Body of pancreas (tissue), 4 donors: ENCODE measurements at regions of chr19 and their contacts with region 1.

Region 1: DNA sequence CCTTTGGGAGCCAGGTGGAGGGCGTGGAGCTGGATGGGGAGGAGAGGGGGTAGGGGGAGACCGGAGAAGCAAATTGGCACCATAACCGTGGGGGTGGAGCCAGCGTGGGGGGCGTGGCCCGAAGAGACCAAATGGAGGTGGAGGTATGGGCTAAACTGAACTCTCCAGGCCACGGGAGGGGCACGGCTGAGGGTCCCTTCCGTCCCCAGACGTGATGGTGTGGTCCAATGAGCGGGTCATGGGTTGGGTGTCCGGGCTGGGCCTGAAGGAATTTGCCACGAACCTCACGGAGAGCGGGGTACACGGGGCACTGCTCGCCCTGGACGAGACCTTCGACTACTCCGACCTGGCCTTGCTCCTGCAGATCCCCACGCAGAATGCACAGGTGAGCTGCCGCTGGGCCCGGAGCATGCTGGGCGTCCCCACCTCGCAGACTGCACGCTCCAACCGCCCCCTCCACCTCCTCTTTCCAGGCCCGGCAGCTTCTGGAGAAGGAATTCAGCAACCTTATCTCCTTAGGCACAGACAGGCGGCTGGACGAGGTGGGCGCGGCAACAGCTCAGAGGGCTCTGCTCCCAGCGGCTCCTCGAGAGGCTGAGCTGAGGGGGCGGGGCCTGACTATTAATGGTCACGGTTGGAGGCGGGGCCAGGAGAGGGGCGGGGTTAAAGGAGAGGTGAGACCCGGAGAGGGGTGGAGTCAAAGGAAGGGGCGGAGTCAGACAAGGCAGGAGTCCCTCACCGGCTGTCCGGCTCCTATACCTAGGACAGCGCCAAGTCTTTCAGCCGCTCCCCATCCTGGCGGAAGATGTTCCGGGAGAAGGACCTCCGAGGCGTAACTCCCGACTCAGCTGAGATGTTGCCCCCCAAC is 6.2 kb downstream of the HRC start:
- DNase-seq: peak; percentile 99 to 100 (median 100)
- ATAC-seq: peak; percentile 78
- H3K4me3 ChIP-seq: peak overlapping the region; percentile 23 to 72
- H3K27ac ChIP-seq: peak overlapping the region; percentile 78 to 85 (median 82)
- H3K4me1 ChIP-seq: peaks cover 44% of the 10 kb centered on the region
- H3K27me3 ChIP-seq: no peaks in the 10 kb centered on the region
- CTCF ChIP-seq: no peak
- POLR2A ChIP-seq: peak; percentile 12 to 34 (median 19)

Region 2: DNA sequence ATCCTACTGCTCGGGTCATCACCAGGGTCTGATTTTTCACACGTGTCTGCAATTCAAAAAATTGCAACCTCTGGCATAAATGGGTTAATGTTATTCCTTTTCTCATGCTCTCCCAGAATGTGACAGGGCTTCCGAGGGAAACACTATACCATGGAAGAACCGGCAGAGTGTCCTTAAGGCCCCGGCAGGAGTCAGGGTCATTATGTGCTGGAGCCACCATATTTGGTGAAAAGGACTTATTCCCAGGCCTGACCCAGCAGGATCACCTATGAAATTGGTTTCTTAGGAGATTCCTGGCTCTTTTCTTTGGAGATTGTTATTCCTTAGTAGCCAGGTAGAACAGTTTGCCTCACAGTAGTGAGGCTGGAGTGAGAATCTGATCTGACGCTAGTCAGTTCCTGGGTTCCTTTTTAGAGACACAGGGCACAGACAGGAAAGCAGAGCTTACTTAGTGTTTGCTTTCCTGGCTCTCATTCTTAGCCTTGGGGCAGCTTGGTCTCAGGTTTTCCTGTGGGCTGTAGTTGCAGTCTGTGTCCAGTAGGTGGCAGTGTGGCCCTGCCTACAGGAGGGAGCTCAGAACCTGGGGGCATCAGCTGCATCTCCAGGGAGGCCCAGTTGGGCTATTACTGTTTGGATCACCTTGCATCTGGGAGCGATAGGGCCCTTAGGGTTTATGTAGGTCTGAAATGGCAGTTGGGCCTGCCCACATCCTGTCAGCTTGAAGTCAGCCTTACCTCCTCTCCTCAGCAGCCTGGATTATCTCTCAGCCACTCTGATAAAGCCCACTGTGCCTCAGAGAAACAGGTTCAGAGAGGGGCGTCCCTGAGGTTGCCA is 51.3 kb before region 1 on chr19:
- intact Hi-C with region 1: loop called (anchors 10 kb)
- DNase-seq: peak; percentile 72 to 80 (median 73)
- ATAC-seq: peak; percentile 86
- H3K4me3 ChIP-seq: no peak overlapping the region
- H3K27ac ChIP-seq: peak overlapping the region in 1 of 4 donors; percentile 45
- H3K4me1 ChIP-seq: peaks cover 15% of the 10 kb centered on the region
- H3K27me3 ChIP-seq: no peaks in the 10 kb centered on the region
- CTCF ChIP-seq: peak; percentile 93 to 100 (median 96)
- POLR2A ChIP-seq: no peak

Region 3: DNA sequence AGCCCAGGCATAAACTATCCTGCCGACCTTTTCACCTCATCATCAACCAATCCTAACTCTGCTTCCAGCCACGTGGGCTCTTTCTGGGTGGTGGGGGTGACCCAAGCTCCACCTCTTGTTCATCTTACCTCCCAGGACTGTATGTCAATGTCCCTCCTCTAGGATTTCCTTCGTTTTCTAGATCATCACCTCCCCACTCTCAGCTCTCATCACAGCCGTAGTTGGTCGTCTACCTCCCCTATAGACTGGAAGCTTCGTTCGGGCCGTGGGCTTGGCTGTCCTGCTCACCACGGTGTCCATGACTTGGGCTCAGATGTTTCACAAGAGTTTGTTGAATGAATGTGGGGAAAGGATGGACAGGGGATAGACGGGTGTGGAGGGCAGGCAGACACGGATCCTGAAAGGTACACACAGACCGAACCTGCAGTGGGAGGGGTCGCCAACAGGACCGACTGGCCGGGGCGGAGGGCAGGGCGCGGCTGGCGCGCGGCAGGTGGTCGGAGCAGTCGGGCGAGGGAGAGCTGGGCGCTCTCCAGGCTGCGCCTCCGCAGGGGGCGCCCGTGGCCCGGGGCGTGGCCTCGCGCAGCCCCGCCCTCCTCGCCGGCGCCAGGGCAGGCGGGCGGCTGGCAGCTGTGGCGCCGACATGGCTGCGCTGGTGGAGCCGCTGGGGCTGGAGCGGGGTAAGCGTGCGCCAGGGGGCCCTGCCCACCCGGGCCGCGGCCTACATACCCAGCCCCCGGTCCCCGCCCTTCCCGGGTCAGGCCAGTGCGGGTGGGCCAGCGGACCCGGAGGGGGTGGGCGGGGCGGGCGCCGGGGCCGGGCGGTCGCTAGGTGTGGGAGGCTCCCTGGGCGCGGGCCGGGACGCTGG is 35.0 kb before region 1 on chr19 and contains the start of gene LIN7B:
- intact Hi-C with region 1: loop called (anchors 5 kb)
- DNase-seq: peak; percentile 52 to 78 (median 72)
- ATAC-seq: peak; percentile 69
- H3K4me3 ChIP-seq: peak within 1 kb of the TSS; percentile 70 to 80
- H3K27ac ChIP-seq: peak within 1 kb of the TSS in 3 of 4 donors; percentile 63 to 73 (median 68)
- H3K4me1 ChIP-seq: peaks cover 29% of the 10 kb centered on the region
- H3K27me3 ChIP-seq: no peaks in the 10 kb centered on the region
- CTCF ChIP-seq: peak in 6 of 7 experiments; percentile 23 to 80 (median 66)
- POLR2A ChIP-seq: no peak
- total RNA-seq, gene LIN7B: 8.3 to 24.1 TPM

Region 4: GRCh38 chr19:49127674-49128544 is 21.1 kb before region 1 on chr19:
- intact Hi-C with region 1: loop called (anchors 2 kb)
- DNase-seq: peak; percentile 96 to 98 (median 97)
- ATAC-seq: peak; percentile 97
- H3K4me3 ChIP-seq: no peak overlapping the region
- H3K27ac ChIP-seq: peak overlapping the region in 3 of 4 donors; percentile 50 to 78 (median 74)
- H3K4me1 ChIP-seq: peaks cover 15% of the 10 kb centered on the region
- H3K27me3 ChIP-seq: no peaks in the 10 kb centered on the region
- CTCF ChIP-seq: peak in 5 of 7 experiments; percentile 14 to 54 (median 34)
- POLR2A ChIP-seq: peak in 1 of 3 donors; percentile 23

Region 5: DNA sequence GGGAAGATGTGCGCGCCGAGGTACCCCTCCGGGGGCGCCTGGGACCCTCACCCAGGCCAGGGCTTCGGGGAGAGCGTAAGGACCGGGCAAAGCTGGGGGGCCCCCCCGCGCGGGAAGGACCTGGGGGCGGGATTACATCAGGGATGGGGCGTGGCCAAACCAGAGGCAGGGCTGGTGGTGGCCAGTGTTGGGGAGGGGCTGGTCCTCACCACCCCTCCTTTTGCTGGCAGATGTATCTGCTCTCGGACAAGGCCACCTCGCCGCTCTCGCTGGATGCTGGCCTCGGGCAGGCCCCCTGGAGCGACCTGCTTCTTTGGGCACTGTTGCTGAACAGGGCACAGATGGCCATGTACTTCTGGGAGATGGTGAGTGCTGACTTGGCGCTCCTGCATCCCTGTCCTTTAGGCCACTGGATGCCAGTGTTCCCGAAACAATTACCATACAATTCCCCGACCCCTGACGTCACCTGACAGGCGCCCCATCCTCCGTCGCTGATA is 33.9 kb after region 1 on chr19:
- intact Hi-C with region 1: no loop called
- DNase-seq: no peak
- ATAC-seq: no peak
- H3K4me3 ChIP-seq: no peak overlapping the region
- H3K27ac ChIP-seq: no peak overlapping the region
- H3K4me1 ChIP-seq: no peaks in the 10 kb centered on the region
- H3K27me3 ChIP-seq: no peaks in the 10 kb centered on the region
- CTCF ChIP-seq: no peak
- POLR2A ChIP-seq: no peak